GM10248 (cell line): ENCODE measurements at regions of chr11 and their contacts with region 1.

Region 1: DNA sequence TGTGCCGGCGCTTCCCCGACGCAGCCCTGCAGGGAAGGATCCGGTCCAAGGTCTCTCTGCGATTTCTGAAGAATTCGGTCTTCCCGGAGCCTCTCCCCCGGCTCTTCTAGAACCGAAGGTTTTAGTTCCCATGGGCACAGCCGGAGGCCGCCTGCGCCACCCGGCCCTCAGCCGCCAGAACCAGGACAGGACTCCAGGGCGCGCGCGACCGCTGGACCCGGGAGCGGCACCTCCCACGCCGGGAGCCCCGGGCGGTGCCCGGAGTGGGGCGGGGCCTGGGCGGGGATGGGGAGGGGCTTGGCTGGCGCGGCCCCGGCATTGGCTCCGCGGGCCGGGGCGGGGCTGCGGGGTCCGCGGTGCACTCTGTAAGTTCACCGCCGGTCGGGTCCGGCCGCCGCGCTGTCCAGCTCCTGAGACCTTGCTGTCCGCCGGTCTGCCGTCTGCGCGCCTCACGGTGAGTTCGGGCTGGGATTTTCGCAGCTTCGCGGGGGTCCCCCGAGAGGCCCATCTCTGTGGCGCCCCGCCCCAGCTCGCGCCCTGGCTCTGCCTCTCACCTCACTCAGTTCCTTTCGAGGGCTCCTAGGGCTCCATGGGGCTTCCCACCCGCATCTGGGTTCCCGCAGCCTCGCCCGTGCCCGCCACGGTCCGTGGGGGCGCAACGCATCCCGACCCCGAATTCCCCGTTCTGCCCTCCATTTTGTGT is at the start of gene CDC42EP2:
- DNase-seq: peak; percentile 94
- CTCF ChIP-seq: no peak

Region 2: DNA sequence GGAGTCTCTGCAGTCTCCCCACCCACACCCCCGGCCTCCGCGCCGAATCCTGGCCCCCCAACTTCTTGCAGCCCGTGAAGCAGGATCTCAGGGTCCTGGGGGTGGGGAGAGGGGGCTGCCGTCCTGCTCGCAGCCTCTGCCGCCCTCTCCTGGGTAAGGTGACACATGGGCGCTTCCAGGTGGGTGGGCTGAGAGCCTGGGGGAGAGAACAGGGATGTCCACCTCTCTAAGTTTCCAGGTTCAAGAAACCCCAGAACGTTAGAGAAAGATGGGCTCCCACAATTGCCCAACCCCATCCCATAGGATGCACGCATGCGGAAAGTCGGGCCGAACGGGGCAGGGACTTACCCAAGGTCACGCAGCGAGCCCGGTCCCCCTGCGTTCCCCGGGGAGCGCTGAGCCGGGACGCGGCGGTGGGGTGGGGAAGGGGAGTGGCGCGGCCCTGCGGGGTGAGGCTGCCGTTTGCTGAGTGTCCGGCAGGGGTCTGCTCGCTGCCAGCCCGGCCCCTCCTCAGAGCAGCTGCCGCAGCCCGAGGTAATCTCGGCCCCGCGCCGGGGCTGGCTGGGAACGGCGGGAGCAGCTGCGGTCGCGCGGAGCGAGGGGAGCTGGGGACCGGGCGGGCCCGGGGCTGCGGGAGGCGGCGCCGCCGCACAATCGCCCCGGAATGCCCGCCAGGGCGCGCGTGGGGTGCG is 133.6 kb before region 1 on chr11:
- CTCF ChIA-PET with region 1: interaction called, 13 read pairs
- POLR2A ChIA-PET with region 1: no interaction called
- DNase-seq: peak; percentile 78
- CTCF ChIP-seq: peak; percentile 80

Region 3: DNA sequence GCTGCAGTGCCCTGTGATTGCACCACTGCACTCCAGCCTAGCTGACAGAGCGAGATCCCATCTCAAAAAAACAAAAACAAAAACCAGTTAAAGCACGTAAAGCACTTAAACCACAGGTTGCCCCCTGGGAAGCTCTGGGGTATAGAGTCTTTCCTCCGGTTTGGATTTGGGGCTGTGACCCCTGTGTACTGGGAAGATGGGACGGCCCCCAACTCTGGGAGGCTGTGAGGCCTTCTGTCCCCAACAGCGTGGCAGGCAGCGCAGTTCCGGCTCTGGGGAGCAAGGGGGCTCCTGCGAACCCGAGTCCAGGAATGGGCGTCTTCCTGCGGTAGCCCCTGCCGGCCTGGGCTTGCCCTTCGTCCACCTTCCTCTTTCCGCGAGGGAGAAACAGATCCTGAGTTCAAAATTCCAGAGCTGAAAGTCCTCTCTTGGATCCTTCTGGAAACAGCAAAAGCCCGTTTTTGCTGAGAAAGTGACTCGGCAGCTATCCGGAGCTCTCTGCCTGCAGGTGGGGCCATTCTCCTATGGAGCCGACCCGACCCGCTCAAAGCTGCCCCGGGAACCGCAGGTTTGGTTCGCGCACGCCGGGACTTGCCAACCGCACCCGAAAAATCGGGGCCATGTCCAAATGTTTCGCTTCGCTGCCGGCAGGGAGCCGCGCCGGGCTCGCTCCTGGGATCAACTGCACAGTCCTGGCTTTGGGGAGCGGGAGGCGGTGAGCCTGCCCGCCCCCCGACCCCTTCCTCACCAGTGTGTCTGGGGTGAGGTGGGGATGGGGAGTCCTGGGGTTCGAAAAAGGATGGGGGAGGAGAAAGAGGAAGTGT is 89.2 kb before region 1 on chr11:
- CTCF ChIA-PET with region 1: interaction called, 60 read pairs
- POLR2A ChIA-PET with region 1: no interaction called
- DNase-seq: peak; percentile 84
- CTCF ChIP-seq: peak; percentile 53

Region 4: GRCh38 chr11:65261591-65262380 is 52.9 kb before region 1 on chr11 and contains the start of gene POLA2:
- CTCF ChIA-PET with region 1: interaction called, 54 read pairs
- POLR2A ChIA-PET with region 1: no interaction called
- DNase-seq: peak; percentile 100
- CTCF ChIP-seq: no peak

Region 5: GRCh38 chr11:65340226-65340625 is 25.6 kb after region 1 on chr11:
- CTCF ChIA-PET with region 1: interaction called, 288 read pairs
- POLR2A ChIA-PET with region 1: no interaction called
- DNase-seq: no peak
- CTCF ChIP-seq: no peak

Region 6: DNA sequence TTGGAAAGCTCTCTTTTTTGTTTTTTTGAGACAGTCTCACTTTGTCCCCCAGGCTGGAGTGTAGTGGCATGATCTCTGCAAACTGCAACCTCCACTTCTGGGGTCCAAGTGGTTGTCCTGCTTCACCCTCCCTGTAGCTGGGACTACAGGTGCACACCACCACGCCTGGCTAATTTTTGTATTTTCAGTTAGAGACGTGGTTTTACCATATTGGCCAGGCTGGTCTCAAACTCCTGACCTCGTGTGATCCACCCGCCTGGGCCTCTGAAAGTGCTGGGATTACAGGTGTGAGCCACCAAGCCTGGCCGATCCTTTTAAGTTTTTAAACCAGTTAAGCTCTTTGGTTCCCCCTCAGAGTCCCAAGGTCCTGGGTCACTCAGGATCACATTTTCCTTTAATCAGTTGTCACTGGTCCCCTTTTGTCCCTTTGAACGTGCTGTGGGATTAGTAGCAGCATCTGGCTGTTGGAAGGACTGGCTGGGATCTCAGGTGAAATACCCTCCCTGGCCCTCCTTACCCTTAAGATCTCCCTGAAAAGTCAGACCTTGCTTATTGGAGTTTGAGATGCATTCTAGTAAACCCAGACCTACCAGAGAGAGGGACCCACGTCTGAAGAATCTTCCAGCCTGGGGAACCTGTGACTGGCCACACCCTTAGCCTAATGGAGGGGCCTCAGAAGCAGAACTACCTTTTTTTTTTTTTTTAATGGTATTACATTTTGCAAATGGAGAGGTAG is 192.3 kb after region 1 on chr11:
- CTCF ChIA-PET with region 1: interaction called, 17 read pairs
- POLR2A ChIA-PET with region 1: interaction called, 3 read pairs
- DNase-seq: no peak
- CTCF ChIP-seq: no peak